Endothelial cell of umbilical vein (primary cell): ENCODE measurements at regions of chr1 and their contacts with region 1.

Region 1: DNA sequence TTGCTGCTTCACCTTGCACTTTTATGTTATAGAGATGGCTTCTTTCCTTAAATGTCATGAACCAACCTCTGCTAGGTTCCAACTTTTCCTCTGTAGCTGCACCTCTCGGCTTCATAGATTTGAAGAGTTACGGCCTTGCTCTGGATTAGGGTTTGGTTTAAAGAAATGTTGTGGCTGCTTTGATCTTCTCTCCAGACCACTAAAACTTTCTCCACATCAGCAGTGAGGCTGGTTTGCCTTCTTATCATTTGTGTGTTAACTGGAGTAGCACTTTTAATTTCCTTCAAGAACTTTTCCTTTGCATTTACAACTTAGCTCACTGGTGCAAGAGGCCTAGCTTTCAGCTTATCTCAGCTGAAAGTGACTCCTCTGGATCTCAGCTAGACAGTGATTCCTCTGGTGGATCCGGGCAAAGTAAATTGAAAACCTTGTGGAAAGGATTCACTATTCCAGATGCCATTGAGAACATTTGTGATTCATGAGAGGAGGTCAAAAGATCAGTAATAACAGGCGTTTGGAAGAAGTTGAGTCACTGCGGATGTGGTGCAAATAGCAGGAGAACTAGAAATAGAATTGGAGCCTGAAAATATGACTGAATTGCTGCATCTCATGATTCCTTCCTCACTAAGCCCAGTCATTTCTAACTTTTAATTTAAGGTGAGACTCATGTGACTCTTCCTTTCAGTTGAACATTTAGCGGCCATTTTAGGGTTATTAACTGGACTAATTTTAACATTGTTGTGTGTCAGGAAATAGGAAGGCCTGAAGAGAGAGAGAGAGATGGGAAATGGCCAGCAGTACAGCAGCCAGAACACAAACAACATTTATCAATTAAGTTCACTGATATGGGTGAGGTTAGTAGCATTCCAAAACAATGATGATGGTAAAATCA is 16.2 kb upstream of the RGS1 start:
- DNase-seq: peak; percentile 96
- H3K4me3 ChIP-seq: no peak overlapping the region
- H3K27ac ChIP-seq: peak overlapping the region; percentile 91
- H3K4me1 ChIP-seq: peaks cover 24% of the 10 kb centered on the region
- H3K27me3 ChIP-seq: no peaks in the 10 kb centered on the region
- CTCF ChIP-seq: no peak
- POLR2A ChIP-seq: no peak

Region 2: GRCh38 chr1:192453360-192453992 is 105.9 kb before region 1 on chr1:
- CTCF ChIA-PET with region 1: no interaction called
- POLR2A ChIA-PET with region 1: no interaction called
- dilution Hi-C with region 1: no loop called
- intact Hi-C with region 1: no loop called
- DNase-seq: peak; percentile 58
- H3K4me3 ChIP-seq: no peak overlapping the region
- H3K27ac ChIP-seq: peak overlapping the region; percentile 59
- H3K4me1 ChIP-seq: peaks cover 14% of the 10 kb centered on the region
- H3K27me3 ChIP-seq: no peaks in the 10 kb centered on the region
- CTCF ChIP-seq: no peak
- POLR2A ChIP-seq: no peak

Region 3: GRCh38 chr1:192489748-192490147 is 69.6 kb before region 1 on chr1:
- CTCF ChIA-PET with region 1: interaction called, 3 read pairs
- POLR2A ChIA-PET with region 1: no interaction called
- dilution Hi-C with region 1: no loop called
- intact Hi-C with region 1: loop called (anchors 1 kb)
- DNase-seq: peak; percentile 95
- H3K4me3 ChIP-seq: no peak overlapping the region
- H3K27ac ChIP-seq: peak overlapping the region; percentile 53
- H3K4me1 ChIP-seq: peaks cover 4% of the 10 kb centered on the region
- H3K27me3 ChIP-seq: no peaks in the 10 kb centered on the region
- CTCF ChIP-seq: no peak
- POLR2A ChIP-seq: no peak

Region 4: DNA sequence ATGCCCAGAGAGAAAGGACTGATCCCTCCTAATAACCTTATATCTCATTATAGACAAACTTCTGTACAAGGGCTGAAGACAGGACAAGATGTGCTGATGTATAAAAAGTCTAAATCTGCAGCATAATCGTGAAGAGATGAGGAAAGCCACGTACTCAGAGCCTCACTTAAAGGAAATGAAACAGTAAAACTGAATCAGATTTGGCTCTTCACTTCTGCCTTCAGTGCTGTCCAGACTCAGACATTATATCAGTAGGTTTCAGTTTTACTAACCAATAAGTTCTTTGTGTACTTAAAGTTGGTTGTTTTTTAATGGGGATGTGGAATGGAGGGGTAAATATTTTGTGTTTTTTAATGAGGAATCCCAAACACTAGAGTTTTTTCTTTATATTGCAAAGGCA is 29.1 kb before region 1 on chr1:
- CTCF ChIA-PET with region 1: no interaction called
- POLR2A ChIA-PET with region 1: no interaction called
- dilution Hi-C with region 1: no loop called
- intact Hi-C with region 1: loop called (anchors 1 kb)
- DNase-seq: peak; percentile 61
- H3K4me3 ChIP-seq: no peak overlapping the region
- H3K27ac ChIP-seq: peak overlapping the region; percentile 75
- H3K4me1 ChIP-seq: peaks cover 26% of the 10 kb centered on the region
- H3K27me3 ChIP-seq: no peaks in the 10 kb centered on the region
- CTCF ChIP-seq: no peak
- POLR2A ChIP-seq: no peak

Region 5: DNA sequence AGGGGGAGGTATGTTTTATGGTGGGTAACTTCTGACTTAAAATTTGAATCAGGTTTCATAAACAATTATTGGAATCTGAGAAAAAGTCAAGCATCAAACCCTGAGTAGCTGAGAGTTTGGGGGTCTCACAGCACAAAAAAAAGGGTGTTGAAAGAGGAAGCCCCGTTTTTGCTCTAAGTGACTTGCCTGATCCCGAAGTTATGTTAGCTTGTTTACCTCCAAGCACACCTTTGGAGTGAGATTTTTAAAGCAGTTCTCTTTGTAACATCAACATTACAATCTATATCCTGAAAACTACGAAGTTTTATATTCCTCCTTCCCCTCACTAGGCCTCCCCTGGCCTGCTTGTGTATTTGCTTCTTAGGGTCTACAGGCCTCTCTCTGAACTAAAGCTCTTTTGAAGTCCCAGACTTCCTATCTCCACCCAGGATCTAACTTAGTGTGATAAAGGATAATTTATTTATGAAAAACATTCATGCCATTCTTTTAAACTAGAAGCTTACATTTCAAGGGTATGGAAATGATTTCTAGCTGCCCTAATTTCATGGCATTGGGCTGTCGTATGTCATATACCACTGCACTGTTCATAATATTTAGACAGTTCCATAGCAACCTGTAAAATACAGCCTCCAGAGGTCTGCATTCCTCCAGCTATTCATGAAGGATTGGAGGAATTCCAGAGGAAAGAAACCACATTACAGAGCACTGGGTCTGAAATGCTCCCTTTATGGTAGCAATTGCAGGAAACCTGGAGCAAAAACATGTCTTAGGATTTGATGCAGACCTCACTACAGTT is 19.9 kb before region 1 on chr1:
- CTCF ChIA-PET with region 1: interaction called, 13 read pairs
- POLR2A ChIA-PET with region 1: no interaction called
- dilution Hi-C with region 1: no loop called
- intact Hi-C with region 1: no loop called
- DNase-seq: peak; percentile 95
- H3K4me3 ChIP-seq: no peak overlapping the region
- H3K27ac ChIP-seq: peak overlapping the region; percentile 87
- H3K4me1 ChIP-seq: peaks cover 18% of the 10 kb centered on the region
- H3K27me3 ChIP-seq: no peaks in the 10 kb centered on the region
- CTCF ChIP-seq: no peak
- POLR2A ChIP-seq: no peak

Region 6: DNA sequence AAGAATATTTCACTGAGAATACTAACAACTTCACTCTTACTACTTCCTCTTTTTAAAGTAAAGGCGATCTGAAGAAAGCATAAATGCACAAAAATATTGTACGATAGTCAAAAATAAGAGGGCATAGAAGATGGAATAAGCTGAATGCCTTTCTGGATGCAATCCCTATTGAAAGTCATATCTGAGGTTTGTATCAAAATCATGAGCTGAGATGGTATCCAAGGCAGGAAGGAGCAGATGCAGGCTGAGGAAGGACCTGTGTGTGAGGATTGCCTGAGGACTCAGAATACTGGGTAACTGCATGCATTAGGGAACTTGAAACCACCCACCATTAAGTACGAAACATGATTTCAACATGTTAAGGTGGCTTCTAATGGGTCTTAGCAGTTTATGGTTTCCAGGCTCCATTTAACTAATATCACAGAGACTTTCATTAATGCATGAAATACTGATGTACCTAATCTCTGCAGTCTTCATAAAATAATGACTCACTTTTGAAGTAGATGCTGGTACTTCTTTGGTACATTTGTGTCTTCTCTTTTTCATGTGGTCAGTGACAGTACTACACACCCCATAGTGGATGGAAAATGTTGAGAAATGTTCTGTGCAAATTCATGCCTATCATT is 13.4 kb before region 1 on chr1:
- CTCF ChIA-PET with region 1: interaction called, 7 read pairs
- POLR2A ChIA-PET with region 1: no interaction called
- dilution Hi-C with region 1: no loop called
- intact Hi-C with region 1: loop called (anchors 1 kb)
- DNase-seq: peak; percentile 34
- H3K4me3 ChIP-seq: no peak overlapping the region
- H3K27ac ChIP-seq: peak overlapping the region; percentile 40
- H3K4me1 ChIP-seq: peaks cover 38% of the 10 kb centered on the region
- H3K27me3 ChIP-seq: no peaks in the 10 kb centered on the region
- CTCF ChIP-seq: peak in 1 of 2 donors; percentile 8
- POLR2A ChIP-seq: no peak

Region 7: GRCh38 chr1:192580351-192580962 is 21.1 kb after region 1 on chr1:
- CTCF ChIA-PET with region 1: interaction called, 4 read pairs
- POLR2A ChIA-PET with region 1: no interaction called
- dilution Hi-C with region 1: no loop called
- intact Hi-C with region 1: loop called (anchors 2 kb)
- DNase-seq: peak; percentile 75
- H3K4me3 ChIP-seq: no peak overlapping the region
- H3K27ac ChIP-seq: no peak overlapping the region
- H3K4me1 ChIP-seq: no peaks in the 10 kb centered on the region
- H3K27me3 ChIP-seq: no peaks in the 10 kb centered on the region
- CTCF ChIP-seq: peak; percentile 25 to 35
- POLR2A ChIP-seq: no peak

Region 8: DNA sequence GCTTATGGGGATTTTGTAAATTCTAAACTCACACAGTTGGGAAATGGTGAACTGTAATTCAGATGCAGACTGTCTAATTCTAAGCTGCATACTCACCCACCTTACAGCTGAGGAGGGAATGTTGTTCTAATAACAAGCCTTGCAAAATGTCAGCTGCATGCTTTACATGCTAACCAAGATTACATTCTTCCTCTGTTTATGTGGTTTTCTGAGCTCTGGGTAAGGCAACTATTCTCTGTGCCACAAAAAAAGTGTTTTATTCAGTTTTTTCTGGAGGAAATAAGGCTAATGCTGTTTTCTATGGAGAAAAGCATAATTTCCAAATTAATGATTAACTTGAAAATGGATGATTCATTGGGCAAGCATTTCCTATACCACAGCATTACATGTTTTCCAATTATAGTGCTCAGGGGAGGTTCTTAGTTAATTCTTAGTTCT is 141.5 kb after region 1 on chr1:
- CTCF ChIA-PET with region 1: no interaction called
- POLR2A ChIA-PET with region 1: no interaction called
- dilution Hi-C with region 1: no loop called
- intact Hi-C with region 1: loop called (anchors 5 kb)
- DNase-seq: peak; percentile 74
- H3K4me3 ChIP-seq: no peak overlapping the region
- H3K27ac ChIP-seq: peak overlapping the region; percentile 57
- H3K4me1 ChIP-seq: peaks cover 26% of the 10 kb centered on the region
- H3K27me3 ChIP-seq: no peaks in the 10 kb centered on the region
- CTCF ChIP-seq: no peak
- POLR2A ChIP-seq: no peak